HepG2 (cell line): ENCODE measurements at regions of chr2 and their contacts with region 1.

Region 1: DNA sequence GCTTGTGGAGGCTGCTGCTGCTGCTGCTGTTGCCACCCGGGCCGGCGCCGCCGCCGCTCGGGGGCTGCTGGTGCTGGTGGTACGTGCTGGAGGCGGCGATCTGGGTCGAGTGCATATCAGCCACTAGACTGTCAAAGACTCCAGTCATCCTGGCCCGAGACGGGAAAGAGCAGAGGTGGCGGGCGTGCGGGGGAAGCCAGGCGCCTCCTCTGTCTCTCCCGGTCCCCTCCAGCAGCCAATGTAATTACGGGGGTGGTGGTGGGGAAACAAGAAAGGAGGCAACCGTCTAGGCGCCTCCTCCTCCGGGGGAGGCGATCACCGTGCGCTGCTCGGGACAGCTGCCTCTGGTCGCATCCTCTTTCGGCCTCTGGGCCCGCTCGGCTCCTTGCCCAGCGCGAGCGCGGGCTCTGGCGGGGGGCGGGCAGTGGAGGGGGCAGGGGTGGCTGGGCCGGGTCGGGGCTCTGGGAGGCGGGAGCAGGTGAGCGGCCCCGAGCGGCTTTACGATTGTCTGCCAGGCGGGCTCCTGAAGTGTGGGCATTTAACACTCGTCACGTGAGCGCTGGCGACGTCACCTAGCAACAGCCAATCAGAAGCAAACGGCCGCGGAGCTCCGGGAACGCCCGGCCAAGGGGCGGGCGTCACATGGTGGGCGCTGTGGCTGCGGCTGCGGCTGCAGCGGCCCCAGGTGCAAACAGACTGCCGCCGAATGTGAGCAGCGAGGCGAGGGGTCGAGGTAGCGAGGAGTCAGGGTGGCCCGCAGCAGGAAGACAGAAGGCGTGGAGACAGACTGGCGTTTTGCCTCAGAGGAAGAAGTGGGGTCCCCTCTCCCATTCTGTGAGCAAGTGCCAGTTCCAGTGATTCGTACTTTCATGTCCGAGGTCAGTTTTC is at the start of gene DLX2:
- DNase-seq: peak; percentile 93
- ATAC-seq: peak; percentile 67
- H3K4me3 ChIP-seq: peak within 1 kb of the TSS; percentile 61 to 75 (median 65)
- H3K27ac ChIP-seq: no peak within 1 kb of the TSS
- H3K4me1 ChIP-seq: peaks cover 62% of the 10 kb centered on the region
- H3K27me3 ChIP-seq: peaks cover 4 to 37% of the 10 kb centered on the region in 2 experiments
- CTCF ChIP-seq: peak; percentile 59
- EP300 ChIP-seq: peak in 1 of 2 experiments; percentile 25; a peak in 1 of 4 replicates
- POLR2A ChIP-seq: peak in 1 of 2 experiments; percentile 72; a peak in 2 of 4 replicates
- RAD21 ChIP-seq: peak; percentile 62
- total RNA-seq, gene DLX2: 0.15 TPM in 1 of 2 replicates, not detected in the other

Region 2: DNA sequence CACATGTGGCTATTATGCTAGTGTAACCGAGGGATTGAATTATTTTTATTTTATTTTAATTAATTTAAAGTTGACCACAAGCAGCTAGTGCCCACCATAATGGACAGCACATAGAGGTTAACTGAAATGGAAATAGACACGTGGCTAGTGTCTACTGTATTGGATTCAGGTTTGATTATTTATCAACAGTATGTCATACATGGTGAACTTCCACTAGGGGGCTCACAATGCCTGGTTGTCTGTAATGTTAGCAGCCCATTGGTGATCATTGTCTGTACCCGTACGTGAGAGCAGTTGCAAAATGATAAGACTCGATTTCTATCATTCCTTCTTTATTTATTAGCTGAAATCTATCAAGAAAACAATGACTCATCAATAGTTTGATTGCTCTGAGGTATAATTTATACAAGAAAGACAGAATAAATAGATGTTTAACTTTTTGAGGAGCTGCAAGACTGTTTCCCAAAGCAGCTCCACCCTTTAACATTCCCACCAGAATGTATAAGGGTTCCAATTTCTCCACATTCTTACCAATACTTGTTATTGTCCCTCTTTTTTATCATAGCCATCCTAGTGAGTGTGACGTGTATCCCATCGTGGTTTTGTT is 503.8 kb before region 1 on chr2:
- CTCF ChIA-PET with region 1: interaction called, 10 read pairs
- POLR2A ChIA-PET with region 1: interaction called, 3 read pairs
- in situ Hi-C with region 1: no loop called
- intact Hi-C with region 1: no loop called
- DNase-seq: peak; percentile 72
- ATAC-seq: peak; percentile 99
- H3K4me3 ChIP-seq: no peak overlapping the region
- H3K27ac ChIP-seq: no peak overlapping the region
- H3K4me1 ChIP-seq: no peaks in the 10 kb centered on the region
- H3K27me3 ChIP-seq: peaks cover 3 to 9% of the 10 kb centered on the region in 2 experiments; a peak in 4 of 5 replicates
- CTCF ChIP-seq: peak; percentile 83
- EP300 ChIP-seq: no peak
- POLR2A ChIP-seq: no peak
- RAD21 ChIP-seq: 0 out of 2 replicates have a peak, but pooled peaks have one; percentile 46

Region 3: GRCh38 chr2:171798252-171798741 is 304.3 kb before region 1 on chr2:
- CTCF ChIA-PET with region 1: no interaction called
- POLR2A ChIA-PET with region 1: no interaction called
- in situ Hi-C with region 1: loop called (anchors 10 kb)
- intact Hi-C with region 1: no loop called
- DNase-seq: peak; percentile 60
- ATAC-seq: peak; percentile 89
- H3K4me3 ChIP-seq: peak overlapping the region in 1 of 3 experiments; percentile 8; a peak in 1 of 6 replicates
- H3K27ac ChIP-seq: peak overlapping the region; percentile 55
- H3K4me1 ChIP-seq: peaks cover 44% of the 10 kb centered on the region
- H3K27me3 ChIP-seq: no peaks in the 10 kb centered on the region
- CTCF ChIP-seq: no peak
- EP300 ChIP-seq: peak in 1 of 2 experiments; percentile 79; a peak in 2 of 4 replicates
- POLR2A ChIP-seq: no peak
- RAD21 ChIP-seq: no peak

Region 4: DNA sequence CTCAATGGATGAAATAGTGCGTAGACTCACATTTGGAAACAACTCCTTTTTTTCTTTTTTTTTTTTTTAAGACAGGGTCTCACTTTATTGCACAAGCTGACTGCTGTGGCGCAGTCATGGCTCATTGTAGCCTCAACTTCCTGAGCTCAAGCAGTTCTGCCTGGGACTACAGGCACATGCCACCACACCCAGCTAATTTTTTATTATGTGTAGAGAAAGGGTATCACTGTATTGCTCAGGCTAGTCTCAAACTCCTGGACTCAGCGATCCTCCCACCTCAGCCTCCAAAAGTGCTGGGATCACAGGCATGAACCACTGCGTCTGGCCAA is 162.9 kb before region 1 on chr2:
- CTCF ChIA-PET with region 1: interaction called, 7 read pairs
- POLR2A ChIA-PET with region 1: interaction called, 6 read pairs
- in situ Hi-C with region 1: no loop called
- intact Hi-C with region 1: loop called (anchors 1 kb)
- DNase-seq: no peak
- ATAC-seq: no peak
- H3K4me3 ChIP-seq: no peak overlapping the region
- H3K27ac ChIP-seq: no peak overlapping the region
- H3K4me1 ChIP-seq: peaks cover 10% of the 10 kb centered on the region
- H3K27me3 ChIP-seq: no peaks in the 10 kb centered on the region
- CTCF ChIP-seq: no peak
- EP300 ChIP-seq: no peak
- POLR2A ChIP-seq: no peak
- RAD21 ChIP-seq: no peak

Region 5: DNA sequence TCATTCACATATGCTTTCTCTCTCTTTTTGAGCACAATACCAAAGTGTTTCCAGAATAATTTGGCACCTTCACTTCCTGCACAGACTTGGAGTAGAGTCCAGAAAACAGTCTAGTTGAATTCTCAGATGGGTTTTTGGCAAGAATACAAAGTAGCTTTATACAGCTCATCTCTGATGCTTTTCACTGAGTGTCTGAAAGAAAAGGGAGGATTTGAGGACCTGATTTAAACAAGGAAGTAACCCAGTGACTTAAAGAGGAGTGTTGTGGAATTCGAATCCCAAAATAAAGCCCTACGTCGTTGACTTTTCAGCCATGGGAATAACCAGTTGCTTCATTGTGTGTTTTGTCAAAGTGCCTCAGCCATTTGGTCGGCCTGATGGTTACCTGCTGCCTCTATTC is 71.1 kb before region 1 on chr2:
- CTCF ChIA-PET with region 1: no interaction called
- POLR2A ChIA-PET with region 1: interaction called, 3 read pairs
- in situ Hi-C with region 1: no loop called
- intact Hi-C with region 1: loop called (anchors 2 kb)
- DNase-seq: no peak
- ATAC-seq: no peak
- H3K4me3 ChIP-seq: no peak overlapping the region
- H3K27ac ChIP-seq: no peak overlapping the region
- H3K4me1 ChIP-seq: peaks cover 30% of the 10 kb centered on the region
- H3K27me3 ChIP-seq: no peaks in the 10 kb centered on the region
- CTCF ChIP-seq: no peak
- EP300 ChIP-seq: no peak
- POLR2A ChIP-seq: no peak
- RAD21 ChIP-seq: no peak

Region 6: GRCh38 chr2:172090044-172090961 is 12.3 kb before region 1 on chr2:
- CTCF ChIA-PET with region 1: interaction called, 3 read pairs
- POLR2A ChIA-PET with region 1: interaction called, 42 read pairs
- in situ Hi-C with region 1: no loop called
- intact Hi-C with region 1: loop called (anchors 2 kb)
- DNase-seq: no peak
- ATAC-seq: peak; percentile 5; the same call in 1 of the 3 replicates
- H3K4me3 ChIP-seq: peak overlapping the region in 1 of 3 experiments; percentile 20; a peak in 1 of 6 replicates
- H3K27ac ChIP-seq: no peak overlapping the region
- H3K4me1 ChIP-seq: peaks cover 45% of the 10 kb centered on the region
- H3K27me3 ChIP-seq: peaks cover 18 to 99% of the 10 kb centered on the region in 2 experiments; a peak in 4 of 5 replicates
- CTCF ChIP-seq: no peak
- EP300 ChIP-seq: no peak
- POLR2A ChIP-seq: no peak
- RAD21 ChIP-seq: no peak